BJ (cell line): ENCODE measurements at regions of chr7 and their contacts with region 1.

Region 1: DNA sequence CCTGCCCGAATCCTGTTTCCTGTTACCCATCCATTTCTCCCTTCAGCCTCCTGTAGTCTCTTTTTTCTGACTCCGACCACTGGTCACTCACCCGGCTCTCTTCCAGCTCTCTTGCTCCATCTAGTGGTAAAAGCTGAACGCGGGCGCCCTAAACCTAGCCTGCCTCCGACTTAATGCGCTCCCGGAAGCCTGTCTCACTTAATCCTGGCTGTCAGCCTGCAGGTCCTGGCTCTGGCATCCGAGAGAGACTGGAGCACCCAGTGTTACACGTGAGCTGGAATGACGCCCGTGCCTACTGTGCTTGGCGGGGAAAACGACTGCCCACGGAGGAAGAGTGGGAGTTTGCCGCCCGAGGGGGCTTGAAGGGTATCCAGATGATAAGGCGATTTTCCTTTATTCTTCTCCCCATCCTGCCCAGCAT is 10.3 kb downstream of the SUMF2 start:
- DNase-seq: no peak
- H3K4me3 ChIP-seq: no peak overlapping the region
- H3K27me3 ChIP-seq: no peaks in the 10 kb centered on the region
- CTCF ChIP-seq: peak; percentile 96

Region 2: DNA sequence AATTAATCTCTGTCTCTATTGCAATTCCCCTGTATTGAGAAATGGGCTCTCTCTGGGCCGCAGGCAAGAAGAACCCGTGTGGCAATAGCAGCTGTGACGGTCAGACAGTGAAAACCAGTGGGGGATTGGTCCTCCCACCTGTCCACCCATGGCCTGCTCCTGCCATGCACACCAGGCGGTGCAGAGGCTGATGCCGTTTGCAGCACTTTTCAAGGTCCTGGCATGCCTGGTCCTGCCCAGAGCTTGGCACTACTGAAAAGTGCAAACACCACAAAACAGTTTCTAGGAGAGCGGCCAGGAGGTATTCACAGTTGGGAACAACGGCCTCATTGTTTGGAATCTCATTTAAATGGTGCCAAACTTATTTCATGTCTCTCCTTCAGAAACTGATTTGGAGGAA is 64.7 kb before region 1 on chr7:
- CTCF ChIA-PET with region 1: interaction called, 64 read pairs
- POLR2A ChIA-PET with region 1: no interaction called
- DNase-seq: no peak
- H3K4me3 ChIP-seq: no peak overlapping the region
- H3K27me3 ChIP-seq: no peaks in the 10 kb centered on the region
- CTCF ChIP-seq: no peak

Region 3: GRCh38 chr7:56063882-56064625 is 10.3 kb before region 1 on chr7 and contains the start of gene SUMF2:
- CTCF ChIA-PET with region 1: interaction called, 17 read pairs
- POLR2A ChIA-PET with region 1: no interaction called
- DNase-seq: no peak
- H3K4me3 ChIP-seq: peak within 1 kb of the TSS; percentile 78
- H3K27me3 ChIP-seq: no peaks in the 10 kb centered on the region
- CTCF ChIP-seq: peak; percentile 37
- polyA plus RNA-seq, gene SUMF2: 136 and 153 TPM in 2 replicates